Activated CD4-positive, alpha-beta memory T cell treated with anti-CD3 and anti-CD28 coated beads for 36 hours (primary cell): ENCODE measurements at regions of chr18 and their contacts with region 1.

Region 1: DNA sequence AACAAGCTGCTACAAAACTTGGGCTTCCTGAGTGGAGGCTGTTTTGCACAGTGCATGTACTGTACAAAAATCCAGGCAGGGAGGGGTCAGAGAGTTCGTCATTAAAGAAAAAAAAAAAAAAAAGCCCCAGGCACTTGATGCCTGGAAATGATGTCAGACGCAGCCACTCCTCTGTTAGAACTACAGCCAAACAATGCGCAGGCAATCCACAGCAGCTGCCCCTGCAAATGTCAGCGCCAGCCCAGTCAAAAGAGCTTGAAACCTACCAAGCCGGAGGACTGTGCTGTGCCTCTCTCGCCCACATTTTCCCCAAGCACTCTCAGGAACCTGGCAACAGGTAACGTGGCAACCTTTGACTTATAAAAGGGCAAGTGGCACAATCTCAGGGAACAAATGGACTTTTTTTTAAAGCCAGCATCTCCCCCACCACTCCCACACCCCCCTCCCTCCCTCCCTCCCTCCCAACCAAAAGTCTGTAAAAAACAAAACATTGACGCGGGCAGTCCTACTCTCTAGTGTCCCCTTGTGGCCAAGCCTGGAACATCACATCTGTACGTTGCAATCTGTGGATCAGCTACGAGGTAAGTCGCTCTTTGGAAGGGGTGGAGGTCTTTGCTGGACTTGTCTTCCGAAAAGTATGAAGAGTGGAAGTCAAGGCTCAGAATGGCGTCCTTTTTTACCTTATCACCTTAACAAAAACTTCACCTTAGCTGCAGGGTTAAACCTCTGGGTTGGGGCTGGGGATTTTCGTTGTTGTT is 144.1 kb downstream of the TGIF1 start:
- DNase-seq: peak; percentile 93
- H3K4me3 Mint-ChIP-seq: peak overlapping the region; percentile 93
- H3K27ac Mint-ChIP-seq: peak overlapping the region; percentile 100
- H3K4me1 Mint-ChIP-seq: peaks cover 52% of the 10 kb centered on the region
- H3K27me3 Mint-ChIP-seq: no peaks in the 10 kb centered on the region

Region 2: GRCh38 chr18:2958819-2959298 is 635.2 kb before region 1 on chr18:
- CTCF ChIA-PET with region 1: no interaction called
- POLR2A ChIA-PET with region 1: no interaction called
- intact Hi-C with region 1: loop called (anchors 2 kb)
- DNase-seq: peak; percentile 64
- H3K4me3 Mint-ChIP-seq: peak overlapping the region; percentile 62
- H3K27ac Mint-ChIP-seq: peak overlapping the region; percentile 100
- H3K4me1 Mint-ChIP-seq: peaks cover 92% of the 10 kb centered on the region
- H3K27me3 Mint-ChIP-seq: no peaks in the 10 kb centered on the region

Region 3: DNA sequence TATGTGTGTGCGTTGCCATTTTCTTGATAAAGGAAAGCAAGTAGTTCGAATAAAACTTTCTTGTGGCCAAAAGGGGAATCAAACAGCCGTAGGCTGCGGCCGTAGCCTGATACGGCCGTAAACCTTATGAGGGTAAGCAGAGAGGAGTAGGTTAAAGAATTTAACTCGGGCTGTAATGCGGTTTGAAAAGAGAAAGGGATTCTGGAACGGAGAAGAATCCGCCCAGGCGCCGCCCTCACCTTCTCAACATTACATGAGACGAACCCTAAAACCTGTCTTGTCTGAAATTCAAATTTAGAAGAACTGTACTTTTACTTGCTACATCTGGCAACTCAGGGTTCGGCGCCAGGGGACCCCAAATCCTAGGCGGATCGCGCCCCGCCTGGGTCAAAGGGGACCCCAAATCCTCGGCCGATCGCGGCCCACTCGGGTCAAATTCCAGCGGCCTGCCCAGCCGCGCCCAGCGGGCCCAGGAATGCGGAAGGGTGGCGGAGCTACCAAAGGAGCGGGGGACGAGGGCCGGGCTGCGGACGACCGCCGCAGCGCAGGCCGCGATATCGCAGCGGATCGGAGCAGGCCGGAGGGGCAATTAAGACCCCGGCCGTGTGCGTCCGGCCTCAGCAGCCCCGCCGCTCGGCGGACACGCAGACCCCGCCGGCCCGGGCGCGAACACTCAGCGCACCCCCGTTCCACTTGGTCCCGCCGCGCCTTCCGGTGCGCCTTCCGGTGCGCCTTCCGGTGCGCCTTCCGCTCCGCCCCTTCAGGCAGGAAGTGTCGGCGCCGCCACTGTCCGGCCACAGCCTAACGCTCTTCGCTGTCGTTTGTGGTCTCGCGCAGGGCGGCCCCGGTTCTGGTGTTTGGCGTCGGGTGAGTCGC is 332.5 kb before region 1 on chr18 and contains the start of gene MYL12B:
- CTCF ChIA-PET with region 1: interaction called, 6 read pairs
- POLR2A ChIA-PET with region 1: no interaction called
- intact Hi-C with region 1: loop called (anchors 1 kb)
- DNase-seq: peak; percentile 85
- H3K4me3 Mint-ChIP-seq: peak within 1 kb of the TSS; percentile 89
- H3K27ac Mint-ChIP-seq: peak within 1 kb of the TSS; percentile 95
- H3K4me1 Mint-ChIP-seq: peaks cover 62% of the 10 kb centered on the region
- H3K27me3 Mint-ChIP-seq: no peaks in the 10 kb centered on the region
- total RNA-seq, gene MYL12B: 335 to 339 TPM

Region 4: GRCh38 chr18:3305354-3305762 is 288.7 kb before region 1 on chr18:
- CTCF ChIA-PET with region 1: interaction called, 3 read pairs
- POLR2A ChIA-PET with region 1: no interaction called
- intact Hi-C with region 1: loop called (anchors 1 kb)
- DNase-seq: peak; percentile 77
- H3K4me3 Mint-ChIP-seq: no peak overlapping the region
- H3K27ac Mint-ChIP-seq: peak overlapping the region; percentile 80
- H3K4me1 Mint-ChIP-seq: peaks cover 21% of the 10 kb centered on the region
- H3K27me3 Mint-ChIP-seq: peaks cover 15% of the 10 kb centered on the region

Region 5: DNA sequence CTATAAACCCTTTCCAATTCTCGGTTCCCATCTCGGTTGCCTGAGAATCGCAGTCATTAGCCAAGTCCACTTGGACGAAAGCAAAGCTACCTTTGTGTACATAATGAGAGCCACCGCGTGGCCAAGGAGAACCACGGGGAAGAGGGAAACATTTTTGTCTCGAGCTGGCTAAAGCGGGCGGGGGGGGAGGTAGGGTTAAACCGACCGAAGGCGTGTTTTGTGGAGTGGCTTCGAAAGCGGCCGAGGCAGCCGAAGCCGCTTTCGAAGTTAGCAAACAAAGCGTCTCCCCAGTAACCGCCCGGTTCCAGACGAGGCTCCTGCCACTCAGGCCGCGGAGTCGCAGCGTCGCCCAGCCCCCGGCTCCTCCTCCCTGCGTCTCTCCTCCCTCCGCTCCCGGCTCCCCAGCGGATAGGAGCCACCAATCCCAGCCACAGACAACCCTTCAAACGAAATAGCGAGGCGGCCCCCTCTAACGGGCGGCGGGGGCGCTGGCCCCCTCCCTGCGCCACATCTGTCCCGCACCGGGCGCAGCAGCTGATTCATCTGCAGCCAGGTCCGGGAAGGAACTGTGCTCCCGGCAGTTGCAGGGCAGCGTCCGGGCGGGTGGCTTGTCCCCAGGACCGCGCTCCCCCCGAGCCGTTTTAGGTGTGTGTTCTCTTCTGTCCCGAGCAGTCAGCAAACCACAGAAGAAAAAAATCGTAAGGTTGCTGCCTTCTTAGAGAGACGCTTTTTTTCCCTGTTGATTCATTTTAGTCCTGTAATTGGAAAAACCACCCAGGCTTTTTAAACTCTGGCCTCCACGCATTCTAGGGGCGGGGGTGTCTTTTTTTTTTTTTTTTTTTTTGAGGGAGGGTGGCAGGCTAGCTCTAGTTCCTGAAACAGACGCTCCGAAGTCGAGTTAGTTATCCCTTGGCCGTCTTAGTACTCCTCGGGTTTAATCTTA is 145.9 kb before region 1 on chr18:
- CTCF ChIA-PET with region 1: interaction called, 112 read pairs
- POLR2A ChIA-PET with region 1: interaction called, 90 read pairs
- intact Hi-C with region 1: loop called (anchors 1 kb)
- DNase-seq: peak; percentile 93
- H3K4me3 Mint-ChIP-seq: peak overlapping the region; percentile 86
- H3K27ac Mint-ChIP-seq: peak overlapping the region; percentile 93
- H3K4me1 Mint-ChIP-seq: peaks cover 25% of the 10 kb centered on the region
- H3K27me3 Mint-ChIP-seq: no peaks in the 10 kb centered on the region

Region 6: GRCh38 chr18:3541549-3542386 is 52.3 kb before region 1 on chr18:
- CTCF ChIA-PET with region 1: interaction called, 3 read pairs
- POLR2A ChIA-PET with region 1: interaction called, 7 read pairs
- intact Hi-C with region 1: loop called (anchors 2 kb)
- DNase-seq: peak; percentile 68
- H3K4me3 Mint-ChIP-seq: peak overlapping the region; percentile 8
- H3K27ac Mint-ChIP-seq: peak overlapping the region; percentile 59
- H3K4me1 Mint-ChIP-seq: peaks cover 35% of the 10 kb centered on the region
- H3K27me3 Mint-ChIP-seq: no peaks in the 10 kb centered on the region

Region 7: GRCh38 chr18:3652380-3653262 is 58.5 kb after region 1 on chr18:
- CTCF ChIA-PET with region 1: interaction called, 8 read pairs
- POLR2A ChIA-PET with region 1: interaction called, 3 read pairs
- intact Hi-C with region 1: loop called (anchors 2 kb)
- DNase-seq: peak; percentile 88
- H3K4me3 Mint-ChIP-seq: peak overlapping the region; percentile 9
- H3K27ac Mint-ChIP-seq: peak overlapping the region; percentile 83
- H3K4me1 Mint-ChIP-seq: peaks cover 34% of the 10 kb centered on the region
- H3K27me3 Mint-ChIP-seq: no peaks in the 10 kb centered on the region